ENCODE measurements at regions of chr12 and their contacts with region 1.

Region 1: GRCh38 chr12:68317047-68317667 is 15.0 kb downstream of the MDM1 start:
- DNase-seq: peak in 20 of 42 donors; percentile 18 to 81 (median 44)

Region 2: GRCh38 chr12:68040450-68041075 is 276.6 kb before region 1 on chr12:
- intact Hi-C with region 1: loop called (anchors 5 kb)
- DNase-seq: peak; percentile 6 to 91 (median 74)

Region 3: DNA sequence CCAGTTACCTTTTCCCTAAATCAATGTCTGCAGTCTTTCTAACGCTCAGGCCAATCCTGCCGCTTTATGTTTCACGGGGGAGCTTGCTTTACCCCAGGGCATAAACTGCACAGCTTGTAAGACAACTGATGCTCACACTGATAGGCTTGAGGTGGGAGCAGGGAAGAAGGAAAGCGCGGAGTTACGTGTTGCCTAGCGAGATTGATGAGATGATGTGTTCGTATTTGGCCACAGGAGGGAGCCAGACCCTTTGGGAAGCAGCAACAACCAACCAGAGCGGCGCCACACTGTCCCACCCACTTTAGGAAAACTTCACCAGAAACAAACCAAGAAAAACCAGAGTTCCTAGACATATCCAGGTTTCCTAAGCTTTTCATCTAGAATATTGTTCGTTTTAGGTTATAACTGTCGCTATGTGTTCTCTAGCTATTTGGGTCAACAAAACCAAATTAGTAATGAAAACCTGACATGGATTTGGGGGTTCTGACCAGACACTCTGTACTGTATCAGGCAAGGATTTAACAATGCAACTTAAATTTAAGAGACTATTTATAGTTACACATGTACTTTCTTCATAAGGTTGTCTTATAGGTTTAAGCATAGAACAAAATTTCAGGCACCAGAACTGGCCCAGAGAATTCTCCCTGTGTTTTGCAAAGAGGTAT is 93.9 kb before region 1 on chr12:
- intact Hi-C with region 1: loop called (anchors 2 kb)
- DNase-seq: peak; percentile 56 to 92 (median 82)

Region 4: DNA sequence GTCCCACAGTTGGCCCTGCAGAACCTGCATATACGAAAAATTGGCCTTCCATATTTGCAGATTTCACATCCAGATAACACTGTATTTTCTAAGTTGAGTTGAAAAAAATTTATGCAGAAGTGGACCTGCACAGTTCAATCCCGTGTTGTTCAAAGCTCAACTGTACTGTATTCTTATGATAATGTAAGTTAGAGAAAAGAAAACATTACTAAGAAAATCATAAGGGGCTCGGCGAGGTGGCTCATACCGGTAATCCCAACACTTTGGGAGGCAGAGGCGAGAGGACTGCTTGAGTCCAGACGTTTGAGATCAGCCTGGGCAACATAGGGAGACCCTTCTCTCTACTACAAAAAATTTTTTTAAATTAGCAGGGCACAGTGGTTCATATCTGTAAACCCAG is 410.6 kb after region 1 on chr12:
- intact Hi-C with region 1: no loop called
- DNase-seq: no peak